ENCODE measurements at regions of chr15 and their contacts with region 1.

Region 1: DNA sequence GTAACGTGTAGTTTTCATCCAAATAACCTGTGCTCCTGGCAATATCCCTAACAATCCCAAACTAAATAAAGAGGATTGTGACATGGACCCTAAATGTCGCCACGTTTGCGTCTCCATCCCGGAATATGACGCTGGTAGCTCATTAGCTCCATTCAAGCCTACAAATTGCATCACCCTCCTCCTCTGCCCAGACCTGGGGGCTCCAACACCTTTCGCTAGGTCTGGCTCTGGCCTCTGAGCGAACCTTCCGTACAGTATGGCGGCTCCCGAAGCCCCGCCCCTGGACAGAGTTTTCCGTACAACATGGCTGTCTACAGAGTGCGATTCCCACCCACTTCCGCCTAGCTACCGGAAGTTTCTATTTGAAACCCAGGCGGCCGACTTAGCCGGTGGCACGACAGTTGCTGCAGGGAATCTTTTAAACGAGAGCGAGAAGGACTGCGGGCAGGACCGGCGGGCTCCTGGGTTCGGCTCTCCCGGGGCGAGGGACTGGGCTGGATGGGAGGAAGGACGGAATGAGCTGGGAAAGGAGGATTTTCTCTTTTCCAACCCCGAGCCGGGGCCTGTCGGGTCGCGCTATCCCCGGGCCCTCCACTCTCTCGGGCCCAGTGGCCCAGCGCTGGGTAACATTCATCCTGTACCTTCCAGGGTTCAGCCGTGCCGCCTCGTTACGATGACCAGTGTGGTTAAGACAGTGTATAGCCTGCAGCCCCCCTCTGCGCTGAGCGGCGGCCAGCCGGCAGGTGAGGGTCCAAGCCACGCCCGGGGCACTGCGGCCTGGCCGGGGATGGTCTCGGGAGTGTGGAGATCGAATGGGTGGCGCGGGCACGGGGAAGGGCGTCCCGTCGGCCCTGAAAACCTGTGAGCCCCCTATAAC is at the start of gene KNSTRN:
- DNase-seq: peak; percentile 97
- H3K4me3 Mint-ChIP-seq: peak within 1 kb of the TSS; percentile 94
- H3K27ac Mint-ChIP-seq: peak within 1 kb of the TSS; percentile 72
- H3K4me1 Mint-ChIP-seq: peaks cover 18% of the 10 kb centered on the region
- H3K27me3 Mint-ChIP-seq: no peaks in the 10 kb centered on the region
- total RNA-seq, gene KNSTRN: 60.7 to 62.1 TPM

Region 2: DNA sequence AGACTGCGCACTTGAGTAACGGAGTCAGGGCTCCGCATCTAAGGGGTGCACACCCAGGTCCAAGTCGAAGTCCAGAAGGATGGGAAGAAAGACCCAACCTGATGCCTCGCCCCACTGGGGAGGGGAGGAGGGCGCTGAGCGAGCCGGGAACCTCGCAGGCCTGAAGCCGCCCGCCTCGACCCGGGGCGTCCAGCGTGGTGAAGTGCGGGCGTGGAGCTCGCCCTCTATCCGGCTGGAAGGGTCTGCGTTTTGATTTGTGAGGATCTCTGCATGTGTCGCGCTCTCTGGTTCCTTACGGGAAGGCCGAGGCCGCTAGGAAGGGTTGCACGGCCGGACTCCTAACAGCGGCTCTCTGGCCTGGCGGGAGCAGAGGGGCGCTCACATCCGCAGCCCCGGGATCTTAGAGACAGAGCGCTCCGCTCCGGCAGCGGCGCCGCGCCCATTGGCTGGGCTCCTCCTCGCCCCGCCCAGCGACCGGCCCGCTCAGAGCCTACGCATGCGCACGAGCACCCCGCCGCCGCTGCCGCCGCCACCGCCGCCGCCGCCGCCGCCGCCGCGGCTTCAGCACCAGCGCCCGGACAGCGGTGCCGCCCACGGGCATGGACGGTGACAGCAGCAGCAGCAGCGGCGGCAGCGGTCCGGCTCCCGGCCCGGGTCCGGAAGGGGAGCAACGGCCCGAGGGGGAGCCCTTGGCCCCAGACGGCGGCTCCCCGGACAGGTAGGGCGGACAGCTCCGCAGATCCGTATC is 24.9 kb before region 1 on chr15 and contains the start of gene DISP2:
- CTCF ChIA-PET with region 1: no interaction called
- intact Hi-C with region 1: loop called (anchors 1 kb)
- DNase-seq: peak; percentile 90
- H3K4me3 Mint-ChIP-seq: peak within 1 kb of the TSS; percentile 72
- H3K27ac Mint-ChIP-seq: no peak within 1 kb of the TSS
- H3K4me1 Mint-ChIP-seq: peaks cover 2% of the 10 kb centered on the region
- H3K27me3 Mint-ChIP-seq: peaks cover 5% of the 10 kb centered on the region
- total RNA-seq, gene DISP2: 0.02 TPM in 1 of 2 experiments, not detected in the other

Region 3: GRCh38 chr15:40525855-40526254 is 143.0 kb after region 1 on chr15:
- CTCF ChIA-PET with region 1: no interaction called
- intact Hi-C with region 1: no loop called
- DNase-seq: no peak
- H3K4me3 Mint-ChIP-seq: no peak overlapping the region
- H3K27ac Mint-ChIP-seq: no peak overlapping the region
- H3K4me1 Mint-ChIP-seq: no peaks in the 10 kb centered on the region
- H3K27me3 Mint-ChIP-seq: no peaks in the 10 kb centered on the region

Measured in activated naive CD4-positive, alpha-beta T cell treated with anti-CD3 and anti-CD28 coated beads for 36 hours (primary cell).